ENCODE measurements at regions of chr19 and their contacts with region 1.

Region 1: GRCh38 chr19:30649934-30650614 is 277.9 kb downstream of the ZNF536 start:
- DNase-seq: peak; percentile 51
- ATAC-seq: peak; percentile 71
- H3K4me3 ChIP-seq: no peak overlapping the region
- H3K27ac ChIP-seq: no peak overlapping the region
- H3K4me1 ChIP-seq: no peaks in the 10 kb centered on the region
- H3K27me3 ChIP-seq: no peaks in the 10 kb centered on the region
- CTCF ChIP-seq: peak; percentile 83
- POLR2A ChIP-seq: no peak
- RAD21 ChIP-seq: peak; percentile 82

Region 2: GRCh38 chr19:29760752-29761502 is 889.1 kb before region 1 on chr19:
- CTCF ChIA-PET with region 1: interaction called, 3 read pairs
- POLR2A ChIA-PET with region 1: no interaction called
- dilution Hi-C with region 1: no loop called
- in situ Hi-C with region 1: no loop called
- intact Hi-C with region 1: loop called (anchors 1 kb)
- DNase-seq: no peak
- ATAC-seq: no peak
- H3K4me3 ChIP-seq: no peak overlapping the region
- H3K27ac ChIP-seq: no peak overlapping the region
- H3K4me1 ChIP-seq: no peaks in the 10 kb centered on the region
- H3K27me3 ChIP-seq: 0 out of 2 replicates have a peak, but pooled peaks cover 2% of the 10 kb centered on the region
- CTCF ChIP-seq: no peak
- POLR2A ChIP-seq: no peak
- RAD21 ChIP-seq: no peak

Region 3: GRCh38 chr19:29858000-29858596 is 792.0 kb before region 1 on chr19:
- CTCF ChIA-PET with region 1: no interaction called
- POLR2A ChIA-PET with region 1: no interaction called
- dilution Hi-C with region 1: no loop called
- in situ Hi-C with region 1: no loop called
- intact Hi-C with region 1: loop called (anchors 5 kb)
- DNase-seq: no peak
- ATAC-seq: peak; percentile 42; the same call in 1 of the 2 replicates
- H3K4me3 ChIP-seq: no peak overlapping the region
- H3K27ac ChIP-seq: no peak overlapping the region
- H3K4me1 ChIP-seq: no peaks in the 10 kb centered on the region
- H3K27me3 ChIP-seq: peaks cover 2% of the 10 kb centered on the region
- CTCF ChIP-seq: peak; percentile 37
- POLR2A ChIP-seq: no peak
- RAD21 ChIP-seq: peak; percentile 19; the same call in 1 of the 2 replicates

Region 4: DNA sequence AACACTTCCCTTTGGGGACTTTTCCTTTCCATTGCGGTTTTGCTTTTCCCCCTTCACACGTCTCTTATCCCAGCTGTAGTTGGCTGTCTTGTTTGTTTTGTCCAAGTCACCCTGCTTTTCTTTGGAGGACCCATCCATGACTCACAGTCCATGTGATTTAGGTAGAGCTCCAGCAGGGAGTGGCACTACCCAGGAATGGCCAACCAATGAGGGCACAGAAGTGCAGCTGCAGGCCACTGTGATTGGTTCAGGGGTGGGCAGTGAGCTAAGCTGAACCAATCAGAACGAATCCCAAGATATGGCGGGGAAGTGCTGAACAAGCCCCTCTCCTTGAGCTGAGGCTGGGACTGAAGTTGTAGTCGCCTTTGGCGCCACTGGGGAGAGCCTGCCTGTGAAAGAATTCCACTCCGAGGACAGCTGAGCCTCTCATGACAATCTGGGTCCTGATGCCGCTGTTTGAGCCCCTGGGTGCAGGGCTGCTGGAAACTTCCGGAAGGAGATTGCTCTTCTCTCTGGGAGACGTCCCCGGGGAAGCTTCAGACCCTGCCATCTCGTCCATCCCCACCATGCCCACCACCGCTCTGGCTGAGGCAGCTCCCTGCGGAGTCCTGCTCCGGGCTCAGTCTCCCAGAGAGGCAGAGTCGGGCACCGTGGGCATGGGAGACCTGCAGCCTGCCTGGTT is 771.0 kb before region 1 on chr19:
- CTCF ChIA-PET with region 1: no interaction called
- POLR2A ChIA-PET with region 1: no interaction called
- dilution Hi-C with region 1: no loop called
- in situ Hi-C with region 1: loop called (anchors 25 kb)
- intact Hi-C with region 1: loop called (anchors 5 kb)
- DNase-seq: peak; percentile 10
- ATAC-seq: no peak
- H3K4me3 ChIP-seq: no peak overlapping the region
- H3K27ac ChIP-seq: no peak overlapping the region
- H3K4me1 ChIP-seq: no peaks in the 10 kb centered on the region
- H3K27me3 ChIP-seq: no peaks in the 10 kb centered on the region
- CTCF ChIP-seq: no peak
- POLR2A ChIP-seq: no peak
- RAD21 ChIP-seq: no peak

Region 5: GRCh38 chr19:30669329-30670010 is 19.4 kb after region 1 on chr19:
- CTCF ChIA-PET with region 1: no interaction called
- POLR2A ChIA-PET with region 1: no interaction called
- dilution Hi-C with region 1: no loop called
- in situ Hi-C with region 1: no loop called
- intact Hi-C with region 1: no loop called
- DNase-seq: peak; percentile 12
- ATAC-seq: peak; percentile 72
- H3K4me3 ChIP-seq: no peak overlapping the region
- H3K27ac ChIP-seq: no peak overlapping the region
- H3K4me1 ChIP-seq: no peaks in the 10 kb centered on the region
- H3K27me3 ChIP-seq: no peaks in the 10 kb centered on the region; the same call in 1 of the 2 replicates
- CTCF ChIP-seq: peak; percentile 64
- POLR2A ChIP-seq: no peak
- RAD21 ChIP-seq: peak; percentile 57

Region 6: DNA sequence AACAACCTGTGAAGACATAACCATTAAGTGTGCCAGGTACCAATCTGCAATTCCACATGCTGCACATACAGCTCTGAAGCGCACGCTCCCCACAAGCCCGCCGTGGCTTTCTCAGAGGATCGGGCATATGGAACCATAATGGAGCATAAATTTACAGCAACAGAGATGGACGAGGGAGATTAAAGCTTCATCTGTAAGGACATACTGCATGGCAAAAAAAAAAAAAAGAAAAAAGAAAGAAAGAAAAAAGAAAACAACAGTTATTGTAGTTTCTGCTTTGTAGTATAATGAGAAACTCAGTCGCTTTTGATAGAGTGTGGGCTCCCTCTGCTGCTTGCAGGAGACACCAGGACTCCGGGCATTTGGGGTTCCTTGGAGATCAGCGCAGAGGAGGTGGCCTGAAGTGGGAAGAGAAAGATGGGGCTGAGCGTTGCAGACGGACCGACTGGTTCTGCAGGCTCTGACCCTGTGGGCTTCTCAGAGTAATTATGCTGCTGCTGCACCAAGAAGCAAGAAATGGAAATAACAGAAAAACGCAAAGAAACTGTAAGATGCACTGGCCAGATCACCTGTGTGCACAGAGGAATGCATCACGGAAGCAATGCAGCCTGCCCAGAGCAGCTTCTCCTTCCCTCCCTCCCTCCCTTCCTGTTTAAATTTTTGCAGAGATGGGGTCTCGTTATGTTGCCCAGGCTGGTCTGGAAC is 1920.2 kb after region 1 on chr19:
- CTCF ChIA-PET with region 1: no interaction called
- POLR2A ChIA-PET with region 1: no interaction called
- dilution Hi-C with region 1: no loop called
- in situ Hi-C with region 1: loop called (anchors 25 kb)
- intact Hi-C with region 1: no loop called
- DNase-seq: peak; percentile 57
- ATAC-seq: peak; percentile 95
- H3K4me3 ChIP-seq: no peak overlapping the region
- H3K27ac ChIP-seq: no peak overlapping the region
- H3K4me1 ChIP-seq: no peaks in the 10 kb centered on the region
- H3K27me3 ChIP-seq: 0 out of 2 replicates have a peak, but pooled peaks cover 2% of the 10 kb centered on the region
- CTCF ChIP-seq: peak; percentile 77
- POLR2A ChIP-seq: no peak
- RAD21 ChIP-seq: peak; percentile 84

Measured in IMR-90 (cell line).